ENCODE measurements at regions of chr4 and their contacts with region 1.

Region 1: GRCh38 chr4:153344131-153345010 is at the start of gene MND1:
- DNase-seq: no peak
- H3K4me3 ChIP-seq: peak within 1 kb of the TSS; percentile 79
- H3K27ac ChIP-seq: no peak within 1 kb of the TSS
- H3K27me3 ChIP-seq: no peaks in the 10 kb centered on the region
- CTCF ChIP-seq: peak; percentile 77
- polyA plus RNA-seq, gene MND1: 0.97 and 2.2 TPM in 2 replicates

Region 2: DNA sequence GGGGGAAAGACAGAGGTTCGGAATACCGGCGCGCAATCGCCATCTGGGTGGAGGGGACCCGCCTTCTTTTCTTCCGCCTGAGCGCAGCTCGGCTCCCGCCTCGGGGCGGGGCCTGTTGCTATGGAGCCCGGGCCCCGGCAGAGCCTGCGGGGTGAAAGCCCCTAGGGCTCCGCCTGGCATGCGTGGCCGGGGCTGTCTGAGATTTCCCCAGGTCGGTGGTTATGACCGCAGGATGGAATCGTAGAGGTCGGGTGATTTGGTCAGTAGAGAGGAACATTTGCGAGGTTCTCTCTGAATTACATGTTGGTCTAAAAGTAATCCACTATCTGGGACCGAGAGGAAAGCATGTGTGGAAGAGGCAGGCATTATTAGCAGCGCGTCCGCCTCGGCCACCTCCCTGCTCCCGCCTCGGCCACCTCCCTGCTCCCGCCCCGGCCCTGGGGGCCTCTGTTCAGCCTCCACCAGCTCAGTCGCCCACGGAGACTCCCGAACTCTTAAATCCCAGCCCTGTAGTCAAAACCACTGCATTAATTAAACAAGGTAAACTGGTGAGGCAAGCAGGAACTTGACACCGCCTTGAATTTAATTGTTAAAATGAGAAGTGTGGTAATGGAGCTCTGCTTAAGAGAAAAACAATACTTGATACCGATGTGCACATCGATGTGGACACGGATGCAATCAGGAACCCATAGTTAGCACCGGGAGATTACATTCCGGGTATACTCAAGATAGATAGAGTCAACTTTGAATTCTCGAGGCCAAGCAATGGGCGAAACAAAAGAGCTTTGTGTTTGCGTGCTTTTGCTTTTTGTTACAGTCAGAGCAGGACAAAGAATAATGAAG is 95.0 kb before region 1 on chr4:
- CTCF ChIA-PET with region 1: no interaction called
- POLR2A ChIA-PET with region 1: no interaction called
- DNase-seq: peak; percentile 10
- H3K4me3 ChIP-seq: peak overlapping the region; percentile 61
- H3K27ac ChIP-seq: peak overlapping the region; percentile 70
- H3K27me3 ChIP-seq: no peaks in the 10 kb centered on the region
- CTCF ChIP-seq: no peak

Region 3: GRCh38 chr4:153466081-153466948 is 121.9 kb after region 1 on chr4 and contains the start of gene TMEM131L:
- CTCF ChIA-PET with region 1: interaction called, 11 read pairs
- POLR2A ChIA-PET with region 1: interaction called, 3 read pairs
- DNase-seq: no peak
- H3K4me3 ChIP-seq: peak within 1 kb of the TSS; percentile 89
- H3K27ac ChIP-seq: no peak within 1 kb of the TSS
- H3K27me3 ChIP-seq: no peaks in the 10 kb centered on the region
- CTCF ChIP-seq: peak; percentile 20
- polyA plus RNA-seq, gene TMEM131L: 13.2 and 15.5 TPM in 2 replicates

Region 4: GRCh38 chr4:153643406-153644383 is 299.3 kb after region 1 on chr4:
- CTCF ChIA-PET with region 1: interaction called, 67 read pairs
- POLR2A ChIA-PET with region 1: no interaction called
- DNase-seq: no peak
- H3K4me3 ChIP-seq: no peak overlapping the region
- H3K27ac ChIP-seq: no peak overlapping the region
- H3K27me3 ChIP-seq: no peaks in the 10 kb centered on the region
- CTCF ChIP-seq: peak; percentile 61

Region 5: GRCh38 chr4:153822316-153822715 is 477.9 kb after region 1 on chr4:
- CTCF ChIA-PET with region 1: no interaction called
- POLR2A ChIA-PET with region 1: no interaction called
- DNase-seq: no peak
- H3K4me3 ChIP-seq: no peak overlapping the region
- H3K27ac ChIP-seq: no peak overlapping the region
- H3K27me3 ChIP-seq: no peaks in the 10 kb centered on the region
- CTCF ChIP-seq: no peak

Measured in AG04450 (cell line).